ENCODE measurements at regions of chrX and their contacts with region 1.

Region 1: GRCh38 chrX:138745196-138745595 is 33.7 kb upstream of the FGF13 start:
- DNase-seq: peak in 1 of 2 experiments; percentile 7
- H3K4me3 ChIP-seq: no peak overlapping the region
- H3K27ac ChIP-seq: no peak overlapping the region
- H3K4me1 ChIP-seq: no peaks in the 10 kb centered on the region
- H3K27me3 ChIP-seq: no peaks in the 10 kb centered on the region
- CTCF ChIP-seq: peak; percentile 85

Region 2: DNA sequence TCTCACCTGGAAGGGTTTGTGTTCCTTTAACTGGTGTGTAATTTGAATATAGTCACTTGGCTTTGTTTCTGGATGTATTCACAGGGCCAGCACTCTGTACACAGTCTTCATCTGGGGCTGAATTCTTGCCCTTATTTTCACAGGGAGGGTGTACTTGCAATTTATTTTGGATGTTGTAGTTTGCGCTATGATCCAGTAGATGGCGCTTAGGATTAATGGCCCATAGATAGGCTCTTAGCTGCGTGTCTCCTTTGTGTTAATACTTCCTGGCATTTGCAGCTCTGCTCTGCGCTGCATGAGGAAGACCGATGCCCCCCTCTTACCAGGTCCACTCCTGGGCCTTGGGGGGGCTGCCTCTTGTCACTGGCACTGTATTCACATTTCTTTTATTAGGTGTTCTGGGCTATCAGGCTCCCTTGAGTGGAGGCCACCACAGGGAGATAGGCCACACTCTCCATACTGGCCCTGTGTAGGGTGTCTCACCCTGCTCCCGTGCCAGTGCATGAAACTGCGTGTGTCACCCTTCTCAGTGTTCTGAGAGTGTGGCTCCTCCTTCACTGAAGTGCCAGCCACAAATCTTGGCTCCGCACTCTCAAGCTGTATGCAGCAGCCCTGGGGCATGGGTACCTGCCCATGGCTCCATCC is 617.0 kb before region 1 on chrX:
- CTCF ChIA-PET with region 1: no interaction called
- POLR2A ChIA-PET with region 1: no interaction called
- intact Hi-C with region 1: loop called (anchors 2 kb)
- DNase-seq: peak in 1 of 2 experiments; percentile 18
- H3K4me3 ChIP-seq: no peak overlapping the region
- H3K27ac ChIP-seq: no peak overlapping the region
- H3K4me1 ChIP-seq: no peaks in the 10 kb centered on the region
- H3K27me3 ChIP-seq: no peaks in the 10 kb centered on the region
- CTCF ChIP-seq: peak; percentile 80

Region 3: GRCh38 chrX:138191998-138192397 is 553.2 kb before region 1 on chrX:
- CTCF ChIA-PET with region 1: no interaction called
- POLR2A ChIA-PET with region 1: interaction called, 4 read pairs
- intact Hi-C with region 1: loop called (anchors 5 kb)
- DNase-seq: peak in 1 of 2 experiments; percentile 2
- H3K4me3 ChIP-seq: no peak overlapping the region
- H3K27ac ChIP-seq: no peak overlapping the region
- H3K4me1 ChIP-seq: no peaks in the 10 kb centered on the region
- H3K27me3 ChIP-seq: no peaks in the 10 kb centered on the region
- CTCF ChIP-seq: peak; percentile 72

Region 4: DNA sequence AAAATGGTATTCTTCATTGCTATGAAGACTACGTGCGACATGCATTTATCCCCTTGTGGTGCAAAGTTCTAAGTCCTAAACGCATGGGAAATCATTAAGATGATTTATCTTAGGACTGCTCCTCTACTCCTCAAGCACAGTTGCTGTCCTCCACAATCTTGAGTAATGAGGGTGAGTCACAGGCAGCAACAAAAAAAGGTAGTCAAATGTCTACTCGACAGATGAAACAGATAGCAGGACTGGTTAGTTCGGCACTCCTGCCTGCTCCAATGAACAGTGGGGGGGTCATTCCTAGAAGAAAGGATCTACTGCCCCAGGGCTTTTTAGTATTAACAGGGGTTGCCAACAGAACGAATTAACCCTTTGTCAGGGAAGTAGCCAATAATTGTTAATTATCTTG is 200.0 kb after region 1 on chrX:
- CTCF ChIA-PET with region 1: no interaction called
- POLR2A ChIA-PET with region 1: no interaction called
- intact Hi-C with region 1: no loop called
- DNase-seq: peak; percentile 10 to 37
- H3K4me3 ChIP-seq: no peak overlapping the region
- H3K27ac ChIP-seq: no peak overlapping the region
- H3K4me1 ChIP-seq: peaks cover 13% of the 10 kb centered on the region
- H3K27me3 ChIP-seq: no peaks in the 10 kb centered on the region
- CTCF ChIP-seq: no peak